Tibial artery (tissue), 4 donors: ENCODE measurements at regions of chr21 and their contacts with region 1.

Region 1: GRCh38 chr21:45033791-45034555 is 40.4 kb upstream of the ADARB1 start:
- DNase-seq: peak; percentile 74 to 89
- H3K4me3 ChIP-seq: peak overlapping the region; percentile 27 to 33
- H3K27ac ChIP-seq: peak overlapping the region; percentile 97 to 98
- H3K4me1 ChIP-seq: peaks cover 10 to 93% (median 72%) of the 10 kb centered on the region in 4 donors
- H3K27me3 ChIP-seq: no peaks in the 10 kb centered on the region
- CTCF ChIP-seq: peak in 1 of 2 experiments; percentile 25

Region 2: DNA sequence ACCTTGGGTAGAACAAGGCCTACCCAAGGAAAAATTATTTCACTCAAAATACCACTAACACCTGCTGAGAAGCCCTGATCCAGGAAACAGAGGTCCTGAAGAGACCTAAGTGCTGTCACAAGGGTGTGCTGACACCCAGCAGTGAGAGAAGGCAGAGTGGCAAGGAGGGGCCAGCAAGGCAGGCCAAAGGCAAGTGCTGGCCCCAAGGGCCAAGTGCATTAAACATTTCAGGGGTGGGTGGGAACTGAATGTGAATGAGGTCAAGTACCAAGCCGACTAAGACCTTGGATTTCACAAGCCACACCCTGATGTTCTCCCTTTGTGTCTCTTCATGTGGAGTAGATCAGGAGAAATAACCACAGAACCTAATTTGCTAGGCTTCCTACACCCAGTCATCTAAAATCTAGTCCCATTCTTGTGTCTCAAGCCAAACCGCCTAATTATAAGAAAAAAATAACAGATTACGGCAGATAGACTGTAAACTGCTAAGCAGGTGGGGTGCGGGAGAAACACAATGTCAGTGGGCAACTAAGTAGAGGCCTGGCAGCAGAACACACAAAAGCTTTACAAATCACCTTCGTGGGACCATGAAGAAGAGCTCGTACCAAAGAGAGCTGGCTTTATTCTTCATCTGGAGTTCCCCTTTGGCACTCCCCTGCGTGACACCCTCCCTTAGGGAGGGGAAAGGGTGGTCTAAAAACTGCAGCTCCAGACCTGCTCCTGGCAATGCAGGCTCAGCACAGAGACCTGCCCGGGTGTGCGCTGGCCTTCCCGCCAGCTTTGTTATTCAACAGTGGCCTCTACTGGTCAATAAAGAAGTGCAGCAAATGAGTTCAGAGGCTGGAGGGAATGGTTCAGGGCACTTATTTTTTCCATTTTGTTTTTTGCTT is 241.0 kb before region 1 on chr21:
- intact Hi-C with region 1: no loop called
- DNase-seq: no peak
- H3K4me3 ChIP-seq: no peak overlapping the region
- H3K27ac ChIP-seq: no peak overlapping the region
- H3K4me1 ChIP-seq: peaks cover 0 to 10% (median 0%) of the 10 kb centered on the region in 4 donors
- H3K27me3 ChIP-seq: no peaks in the 10 kb centered on the region
- CTCF ChIP-seq: peak; percentile 68 to 74

Region 3: GRCh38 chr21:44969931-44970755 is 63.8 kb before region 1 on chr21:
- intact Hi-C with region 1: loop called (anchors 5 kb)
- DNase-seq: no peak
- H3K4me3 ChIP-seq: peak overlapping the region; percentile 4 to 12
- H3K27ac ChIP-seq: peak overlapping the region; percentile 93 to 96
- H3K4me1 ChIP-seq: peaks cover 5 to 97% (median 70%) of the 10 kb centered on the region in 4 donors
- H3K27me3 ChIP-seq: no peaks in the 10 kb centered on the region
- CTCF ChIP-seq: no peak

Region 4: DNA sequence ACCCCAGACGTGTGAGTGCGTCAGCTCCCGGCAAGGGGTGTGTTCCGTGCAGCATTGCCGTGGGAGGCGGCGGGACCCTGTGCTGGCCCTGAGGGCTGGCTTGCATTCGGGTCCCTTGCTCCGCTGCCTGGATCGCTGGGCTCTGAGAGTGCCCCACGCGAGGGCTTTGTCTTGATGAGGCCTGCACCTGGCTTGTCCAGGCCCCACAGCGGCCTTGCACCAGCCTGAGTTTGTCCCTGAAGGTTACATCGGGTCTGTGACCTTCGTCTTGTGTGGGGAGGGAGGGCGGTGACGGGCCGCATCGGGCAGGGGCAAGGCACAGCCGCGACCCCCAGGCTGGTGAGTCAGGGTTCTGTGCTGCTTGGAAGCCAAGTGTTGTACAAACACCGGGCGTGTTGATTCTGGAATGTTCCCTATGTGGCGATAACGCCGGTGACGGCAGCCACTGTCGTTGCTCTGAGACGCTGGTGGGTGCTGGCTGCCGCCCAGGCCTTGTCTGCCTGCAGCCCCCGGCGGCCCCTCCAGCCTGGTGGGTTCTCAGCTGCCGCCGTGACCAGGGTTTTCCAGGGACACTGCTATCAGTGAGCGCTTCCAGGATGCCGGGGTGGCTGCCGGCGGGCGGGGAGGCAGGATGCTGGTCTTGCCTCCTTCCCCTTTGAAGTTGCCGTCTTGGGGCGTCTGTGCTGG is 51.3 kb before region 1 on chr21:
- intact Hi-C with region 1: loop called (anchors 5 kb)
- DNase-seq: peak; percentile 77 to 97
- H3K4me3 ChIP-seq: no peak overlapping the region
- H3K27ac ChIP-seq: peak overlapping the region; percentile 89 to 96
- H3K4me1 ChIP-seq: peaks cover 0 to 77% (median 53%) of the 10 kb centered on the region in 4 donors
- H3K27me3 ChIP-seq: no peaks in the 10 kb centered on the region
- CTCF ChIP-seq: no peak

Region 5: GRCh38 chr21:45078877-45079281 is 44.9 kb after region 1 on chr21:
- intact Hi-C with region 1: no loop called
- DNase-seq: no peak
- H3K4me3 ChIP-seq: peak overlapping the region in 1 of 2 donors; percentile 14
- H3K27ac ChIP-seq: peak overlapping the region; percentile 95
- H3K4me1 ChIP-seq: peaks cover 0 to 75% (median 60%) of the 10 kb centered on the region in 4 donors
- H3K27me3 ChIP-seq: no peaks in the 10 kb centered on the region
- CTCF ChIP-seq: no peak